Activated naive CD4-positive, alpha-beta T cell treated with anti-CD3 and anti-CD28 coated beads, Interleukin-2, amount 10 ng/mL, durations not matched to agents 7 days and 5 days (primary cell): ENCODE measurements at regions of chr2 and their contacts with region 1.

Region 1: DNA sequence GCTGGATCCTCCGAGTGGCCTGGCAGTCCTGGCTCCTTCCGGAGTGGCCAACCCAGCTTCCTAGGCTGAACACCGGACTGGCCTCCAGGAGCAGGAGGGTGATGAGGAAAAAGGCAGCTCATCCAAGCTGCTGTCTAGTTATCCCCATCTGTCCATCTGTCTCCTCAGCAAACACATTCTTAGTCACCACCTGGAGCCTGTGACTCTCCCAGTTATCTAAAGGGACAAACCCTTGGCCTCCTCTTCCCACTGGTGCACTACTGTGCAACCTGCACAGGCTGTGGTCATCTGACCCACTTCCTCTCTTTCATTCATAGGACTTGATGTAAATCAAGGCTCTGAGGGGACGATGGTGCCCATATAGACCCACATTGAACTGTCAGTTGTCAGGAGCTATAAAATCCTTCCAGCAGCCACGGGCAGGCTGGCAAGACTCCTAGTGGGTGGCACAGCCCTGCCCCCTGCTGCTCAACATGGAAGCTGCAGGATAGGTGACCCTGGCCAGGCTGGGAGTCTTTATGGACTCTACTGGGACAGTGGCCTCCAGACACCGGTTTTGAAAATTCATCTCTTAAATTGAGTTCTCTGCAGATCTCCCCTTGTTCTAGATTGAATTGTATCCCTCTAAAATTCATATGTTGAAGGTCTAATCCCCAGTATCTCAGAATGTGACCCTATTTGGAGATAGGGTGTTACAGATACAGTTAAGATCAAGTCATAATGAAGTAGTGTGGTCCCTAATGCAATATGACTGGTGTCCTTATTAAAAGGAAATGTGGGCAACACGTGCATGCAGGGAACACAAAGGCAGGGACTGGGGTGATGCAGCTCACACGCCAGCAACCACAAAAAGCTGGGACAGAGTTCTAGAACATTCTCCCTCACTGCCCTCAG is 29.3 kb upstream of the DUSP2 start:
- DNase-seq: peak; percentile 89
- H3K4me3 Mint-ChIP-seq: no peak overlapping the region
- H3K27ac Mint-ChIP-seq: no peak overlapping the region
- H3K4me1 Mint-ChIP-seq: peaks cover 4% of the 10 kb centered on the region
- H3K27me3 Mint-ChIP-seq: peaks cover 13% of the 10 kb centered on the region

Region 2: GRCh38 chr2:96024336-96025193 is 149.9 kb before region 1 on chr2:
- CTCF ChIA-PET with region 1: interaction called, 13 read pairs
- DNase-seq: no peak
- H3K4me3 Mint-ChIP-seq: no peak overlapping the region
- H3K27ac Mint-ChIP-seq: no peak overlapping the region
- H3K4me1 Mint-ChIP-seq: peaks cover 3% of the 10 kb centered on the region
- H3K27me3 Mint-ChIP-seq: no peaks in the 10 kb centered on the region

Region 3: GRCh38 chr2:96116879-96117697 is 57.4 kb before region 1 on chr2:
- CTCF ChIA-PET with region 1: interaction called, 20 read pairs
- DNase-seq: peak; percentile 65
- H3K4me3 Mint-ChIP-seq: peak overlapping the region; percentile 63
- H3K27ac Mint-ChIP-seq: no peak overlapping the region
- H3K4me1 Mint-ChIP-seq: peaks cover 15% of the 10 kb centered on the region
- H3K27me3 Mint-ChIP-seq: peaks cover 88% of the 10 kb centered on the region

Region 4: DNA sequence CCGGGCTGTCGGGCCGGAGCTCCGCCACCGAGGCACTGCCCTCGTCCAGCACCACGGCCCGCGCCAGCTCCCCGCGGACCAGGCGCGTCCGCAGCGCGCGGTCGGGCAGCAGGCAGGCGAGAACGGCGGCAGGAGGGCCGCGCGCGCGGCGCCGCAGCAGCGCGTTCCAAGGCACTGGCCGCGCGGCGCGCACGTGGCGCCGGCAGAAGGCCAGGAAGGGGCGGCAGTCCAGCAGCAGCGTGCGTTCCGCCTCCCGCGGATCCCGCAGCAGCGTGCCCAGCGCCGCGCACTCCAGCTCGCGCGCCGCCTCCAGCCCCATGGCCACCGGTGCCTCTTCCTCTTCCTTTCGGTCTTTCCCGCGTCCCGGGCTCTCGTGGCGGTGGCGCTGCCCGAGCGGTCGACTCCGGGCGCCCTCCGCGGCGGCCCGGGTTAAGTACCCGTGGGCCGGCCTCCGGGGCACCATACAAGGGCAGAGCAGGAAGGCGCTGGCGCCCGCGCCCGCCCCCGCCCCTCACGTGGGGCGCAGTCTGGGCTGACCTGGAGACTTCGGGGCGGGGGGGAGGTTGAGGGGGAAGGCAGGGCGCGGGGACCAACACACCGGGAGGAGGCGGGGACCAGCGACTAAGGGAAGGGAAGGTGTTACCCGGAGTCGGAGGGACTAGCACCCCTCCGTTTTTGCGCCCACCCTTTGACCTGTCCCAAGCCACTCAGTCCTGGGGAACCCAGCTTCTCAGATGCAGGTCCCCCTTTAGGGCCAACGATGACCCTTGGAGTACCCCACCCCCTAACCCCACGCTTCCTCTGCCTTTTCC is 29.3 kb before region 1 on chr2 and contains the start of gene DUSP2:
- CTCF ChIA-PET with region 1: interaction called, 507 read pairs
- DNase-seq: peak; percentile 91
- H3K4me3 Mint-ChIP-seq: peak within 1 kb of the TSS; percentile 92
- H3K27ac Mint-ChIP-seq: peak within 1 kb of the TSS; percentile 98
- H3K4me1 Mint-ChIP-seq: peaks cover 69% of the 10 kb centered on the region
- H3K27me3 Mint-ChIP-seq: no peaks in the 10 kb centered on the region

Region 5: GRCh38 chr2:96157651-96158553 is 16.6 kb before region 1 on chr2:
- CTCF ChIA-PET with region 1: interaction called, 24 read pairs
- DNase-seq: peak; percentile 82
- H3K4me3 Mint-ChIP-seq: peak overlapping the region; percentile 46
- H3K27ac Mint-ChIP-seq: peak overlapping the region; percentile 87
- H3K4me1 Mint-ChIP-seq: peaks cover 69% of the 10 kb centered on the region
- H3K27me3 Mint-ChIP-seq: no peaks in the 10 kb centered on the region

Region 6: GRCh38 chr2:96186562-96186961 is 12.1 kb after region 1 on chr2:
- CTCF ChIA-PET with region 1: interaction called, 15 read pairs
- DNase-seq: no peak
- H3K4me3 Mint-ChIP-seq: no peak overlapping the region
- H3K27ac Mint-ChIP-seq: no peak overlapping the region
- H3K4me1 Mint-ChIP-seq: peaks cover 2% of the 10 kb centered on the region
- H3K27me3 Mint-ChIP-seq: no peaks in the 10 kb centered on the region

Region 7: GRCh38 chr2:96265840-96266679 is 91.6 kb after region 1 on chr2 and contains the starts of genes CIAO1 and TMEM127:
- CTCF ChIA-PET with region 1: interaction called, 23 read pairs
- DNase-seq: peak; percentile 99
- H3K4me3 Mint-ChIP-seq: peak within 1 kb of the TSS; percentile 91
- H3K27ac Mint-ChIP-seq: peak within 1 kb of the TSS; percentile 86
- H3K4me1 Mint-ChIP-seq: peaks cover 44% of the 10 kb centered on the region
- H3K27me3 Mint-ChIP-seq: no peaks in the 10 kb centered on the region